ENCODE measurements at regions of chr7 and their contacts with region 1.

Region 1: GRCh38 chr7:64665980-64666662 is at the start of gene ZNF107:
- DNase-seq: peak; percentile 92
- ATAC-seq: peak; percentile 100
- H3K4me3 ChIP-seq: peak within 1 kb of the TSS; percentile 82 to 94 (median 90)
- H3K27ac ChIP-seq: peak within 1 kb of the TSS; percentile 73
- H3K4me1 ChIP-seq: peaks cover 19% of the 10 kb centered on the region
- H3K27me3 ChIP-seq: no peaks in the 10 kb centered on the region
- CTCF ChIP-seq: no peak
- EP300 ChIP-seq: no peak
- POLR2A ChIP-seq: peak; percentile 64 to 77
- RAD21 ChIP-seq: no peak
- total RNA-seq, gene ZNF107: 5.4 and 9.4 TPM in 2 replicates

Region 2: GRCh38 chr7:64562626-64563275 is 103.4 kb before region 1 on chr7 and contains the start of gene ZNF680:
- CTCF ChIA-PET with region 1: no interaction called
- POLR2A ChIA-PET with region 1: interaction called, 7 read pairs
- in situ Hi-C with region 1: no loop called
- intact Hi-C with region 1: loop called (anchors 5 kb)
- DNase-seq: peak; percentile 95
- ATAC-seq: peak; percentile 99
- H3K4me3 ChIP-seq: peak within 1 kb of the TSS; percentile 86 to 99 (median 98)
- H3K27ac ChIP-seq: peak within 1 kb of the TSS; percentile 92
- H3K4me1 ChIP-seq: peaks cover 46% of the 10 kb centered on the region
- H3K27me3 ChIP-seq: no peaks in the 10 kb centered on the region
- CTCF ChIP-seq: no peak
- EP300 ChIP-seq: no peak
- POLR2A ChIP-seq: peak; percentile 56 to 90; a peak in 3 of 4 replicates
- RAD21 ChIP-seq: 0 out of 2 replicates have a peak, but pooled peaks have one; percentile 11
- total RNA-seq, gene ZNF680: 12.4 and 14.5 TPM in 2 replicates

Region 3: DNA sequence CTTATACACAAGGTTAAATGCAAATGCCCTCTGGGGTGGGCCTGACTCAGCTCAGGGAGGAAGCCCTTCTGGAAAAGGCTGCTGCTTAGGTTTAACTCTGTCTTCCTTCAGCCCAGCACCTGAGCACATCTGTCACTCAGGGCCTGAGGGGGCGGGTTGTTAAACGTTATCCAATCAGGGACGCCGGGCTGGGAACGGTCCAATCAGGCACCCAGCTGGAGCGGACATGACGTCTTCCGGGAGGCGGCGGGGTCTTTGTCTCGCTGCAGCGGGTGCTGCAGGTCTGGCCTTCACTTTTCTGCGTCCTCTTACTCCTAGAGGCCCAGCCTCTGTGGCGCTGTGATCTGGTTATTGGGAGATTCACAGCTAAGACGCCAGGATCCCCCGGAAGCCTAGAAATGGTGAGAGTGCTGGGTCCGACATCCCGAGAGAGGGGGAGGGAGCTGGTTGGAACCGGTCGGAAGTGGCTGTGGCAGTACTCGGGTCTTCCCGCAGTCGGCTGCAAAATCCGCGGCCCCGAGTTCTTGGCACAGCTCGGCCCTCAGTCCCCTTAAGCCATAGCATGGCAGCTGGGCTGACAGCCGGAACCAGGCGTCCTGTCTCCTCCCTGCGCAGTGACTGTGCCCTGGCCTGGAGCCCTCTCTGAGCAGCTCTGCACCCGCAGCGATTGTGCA is 128.2 kb after region 1 on chr7 and contains the start of gene ZNF138:
- CTCF ChIA-PET with region 1: no interaction called
- POLR2A ChIA-PET with region 1: interaction called, 6 read pairs
- in situ Hi-C with region 1: no loop called
- intact Hi-C with region 1: loop called (anchors 10 kb)
- DNase-seq: peak; percentile 93
- ATAC-seq: peak; percentile 100
- H3K4me3 ChIP-seq: peak within 1 kb of the TSS; percentile 91 to 99 (median 97)
- H3K27ac ChIP-seq: peak within 1 kb of the TSS; percentile 69
- H3K4me1 ChIP-seq: peaks cover 18% of the 10 kb centered on the region
- H3K27me3 ChIP-seq: no peaks in the 10 kb centered on the region; a peak in 1 of 5 replicates
- CTCF ChIP-seq: no peak
- EP300 ChIP-seq: no peak
- POLR2A ChIP-seq: peak; percentile 70 to 79
- RAD21 ChIP-seq: no peak
- total RNA-seq, gene ZNF138: 5.8 and 7.6 TPM in 2 replicates

Measured in HepG2 (cell line).